ENCODE measurements at regions of chr10 and their contacts with region 1.

Region 1: GRCh38 chr10:26481914-26482550 is 43.9 kb downstream of the APBB1IP start:
- DNase-seq: no peak
- CTCF ChIP-seq: no peak

Region 2: DNA sequence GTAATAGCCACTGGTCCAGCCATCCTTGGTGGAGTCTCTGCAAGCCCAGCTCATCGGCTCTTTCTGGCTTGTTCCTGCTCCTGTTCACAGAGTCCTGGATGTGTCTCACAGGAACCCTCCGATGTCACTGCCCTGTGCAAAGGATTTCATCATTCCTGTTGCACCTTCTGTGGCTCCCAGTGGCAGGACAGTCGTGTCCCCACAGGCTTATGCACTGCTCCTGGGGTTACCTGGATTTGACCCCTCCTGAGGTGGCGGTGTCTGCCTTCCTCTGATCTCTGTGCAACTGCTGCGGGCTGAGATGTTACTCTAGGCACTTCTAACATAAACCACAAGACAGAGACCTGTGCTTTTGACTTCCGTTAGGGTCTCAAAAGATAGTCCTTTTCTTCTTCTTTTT is 13.3 kb before region 1 on chr10:
- CTCF ChIA-PET with region 1: interaction called, 12 read pairs
- POLR2A ChIA-PET with region 1: interaction called, 4 read pairs
- DNase-seq: no peak
- CTCF ChIP-seq: no peak

Region 3: DNA sequence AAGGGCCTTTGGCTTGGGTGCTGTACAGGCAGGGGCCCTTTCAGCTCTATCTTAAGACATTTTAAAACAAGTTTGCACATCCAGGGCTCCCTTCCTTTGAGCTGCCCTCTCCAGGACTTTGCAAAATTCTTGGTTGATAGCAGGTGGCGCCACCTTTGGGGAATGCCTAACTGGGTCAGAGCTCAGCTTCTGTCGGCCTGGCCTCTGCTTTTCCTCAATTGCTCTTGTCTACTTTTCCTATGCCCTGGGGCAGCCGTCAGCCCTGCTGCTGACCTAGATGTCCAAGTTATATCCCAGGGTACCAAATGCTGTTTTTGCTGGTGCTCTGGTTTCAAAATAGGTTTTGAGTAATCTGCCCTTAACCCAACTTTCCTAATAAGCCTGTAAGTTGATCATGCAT is 21.9 kb after region 1 on chr10:
- CTCF ChIA-PET with region 1: no interaction called
- POLR2A ChIA-PET with region 1: no interaction called
- DNase-seq: no peak
- CTCF ChIP-seq: peak; percentile 26

Measured in GM10248 (cell line).